ENCODE measurements at regions of chr3 and their contacts with region 1.

Region 1: DNA sequence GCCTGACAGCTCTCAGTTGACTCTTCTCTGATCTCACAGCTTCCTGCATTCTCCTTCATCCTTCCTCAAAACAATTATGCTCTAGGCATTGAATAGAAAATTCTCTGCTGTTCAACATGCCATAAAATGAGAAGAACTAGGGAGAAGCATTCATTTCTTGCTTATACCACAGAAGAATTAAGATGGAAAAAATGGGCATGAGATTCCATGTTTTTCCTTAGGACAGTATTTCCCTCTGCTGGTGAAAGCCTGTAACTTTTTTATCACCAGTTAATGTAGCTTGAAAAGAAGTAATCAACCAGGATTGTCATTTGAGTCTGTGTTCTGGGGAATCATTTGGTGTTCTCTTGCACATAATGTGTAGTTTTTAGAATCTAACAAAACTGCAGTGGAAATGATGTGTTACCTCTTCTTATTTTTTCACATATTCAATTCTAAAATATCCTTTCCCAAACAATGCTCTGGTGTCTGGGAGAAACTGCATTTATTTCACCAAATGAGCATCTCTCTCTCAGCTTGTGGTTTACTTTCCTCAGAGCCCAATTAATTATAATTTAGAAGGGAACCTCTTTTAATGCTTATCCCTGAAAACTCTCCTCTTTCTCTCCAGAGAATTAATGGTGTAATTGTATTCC is 92.8 kb upstream of the DCBLD2 start:
- DNase-seq: no peak
- H3K4me3 ChIP-seq: no peak overlapping the region
- H3K27ac ChIP-seq: no peak overlapping the region
- H3K4me1 ChIP-seq: no peaks in the 10 kb centered on the region
- H3K27me3 ChIP-seq: no peaks in the 10 kb centered on the region
- CTCF ChIP-seq: peak in 2 of 3 experiments; percentile 48 to 49; a peak in 2 of 4 replicates
- EP300 ChIP-seq: no peak
- POLR2A ChIP-seq: no peak
- RAD21 ChIP-seq: peak; percentile 73 to 75

Region 2: GRCh38 chr3:98824256-98824655 is 170.0 kb before region 1 on chr3:
- CTCF ChIA-PET with region 1: interaction called, 47 read pairs
- POLR2A ChIA-PET with region 1: interaction called, 4 read pairs
- DNase-seq: no peak
- H3K4me3 ChIP-seq: no peak overlapping the region
- H3K27ac ChIP-seq: no peak overlapping the region
- H3K4me1 ChIP-seq: no peaks in the 10 kb centered on the region
- H3K27me3 ChIP-seq: no peaks in the 10 kb centered on the region
- CTCF ChIP-seq: peak in 2 of 3 experiments; percentile 32 to 37; a peak in 2 of 4 replicates
- EP300 ChIP-seq: no peak
- POLR2A ChIP-seq: no peak
- RAD21 ChIP-seq: peak; percentile 52 to 66; a peak in 3 of 4 replicates

Region 3: GRCh38 chr3:98945101-98945524 is 49.1 kb before region 1 on chr3:
- CTCF ChIA-PET with region 1: interaction called, 10 read pairs
- POLR2A ChIA-PET with region 1: no interaction called
- DNase-seq: no peak
- H3K4me3 ChIP-seq: no peak overlapping the region
- H3K27ac ChIP-seq: no peak overlapping the region
- H3K4me1 ChIP-seq: no peaks in the 10 kb centered on the region
- H3K27me3 ChIP-seq: no peaks in the 10 kb centered on the region
- CTCF ChIP-seq: no peak
- EP300 ChIP-seq: no peak
- POLR2A ChIP-seq: no peak
- RAD21 ChIP-seq: no peak

Region 4: DNA sequence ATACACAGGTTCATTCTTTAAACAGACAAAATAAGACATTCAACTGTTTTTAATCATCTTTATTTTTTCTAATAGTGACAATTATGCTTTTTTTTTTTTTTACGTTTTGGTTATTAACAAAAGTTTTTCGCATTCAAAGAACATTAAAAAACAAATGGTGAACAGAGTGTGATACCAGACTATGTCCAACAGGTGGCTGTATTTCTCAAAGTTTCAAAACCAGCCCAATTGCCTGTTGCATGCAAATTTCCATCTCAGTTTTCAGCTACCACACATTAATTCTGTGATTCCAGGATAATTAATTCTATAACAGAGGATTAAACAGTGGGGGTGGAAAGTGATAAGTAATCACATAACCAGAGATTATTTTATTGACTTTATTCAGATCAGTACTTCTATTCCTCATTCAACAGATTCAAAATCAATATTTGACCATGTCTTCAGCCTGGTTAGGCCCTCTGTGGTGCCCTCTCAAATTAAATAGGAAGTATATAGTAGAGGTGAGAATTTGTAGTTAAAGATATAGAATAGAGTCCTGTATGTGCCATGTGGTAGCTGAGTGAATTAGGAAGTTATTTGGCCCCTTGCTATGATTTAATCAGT is 29.4 kb after region 1 on chr3:
- CTCF ChIA-PET with region 1: interaction called, 14 read pairs
- POLR2A ChIA-PET with region 1: no interaction called
- DNase-seq: no peak
- H3K4me3 ChIP-seq: no peak overlapping the region
- H3K27ac ChIP-seq: no peak overlapping the region
- H3K4me1 ChIP-seq: no peaks in the 10 kb centered on the region
- H3K27me3 ChIP-seq: no peaks in the 10 kb centered on the region
- CTCF ChIP-seq: peak in 2 of 3 experiments; percentile 47 to 53; a peak in 2 of 4 replicates
- EP300 ChIP-seq: no peak
- POLR2A ChIP-seq: no peak
- RAD21 ChIP-seq: peak; percentile 69 to 72

Measured in H1 (cell line).